ENCODE measurements at regions of chr17 and their contacts with region 1.

Region 1: DNA sequence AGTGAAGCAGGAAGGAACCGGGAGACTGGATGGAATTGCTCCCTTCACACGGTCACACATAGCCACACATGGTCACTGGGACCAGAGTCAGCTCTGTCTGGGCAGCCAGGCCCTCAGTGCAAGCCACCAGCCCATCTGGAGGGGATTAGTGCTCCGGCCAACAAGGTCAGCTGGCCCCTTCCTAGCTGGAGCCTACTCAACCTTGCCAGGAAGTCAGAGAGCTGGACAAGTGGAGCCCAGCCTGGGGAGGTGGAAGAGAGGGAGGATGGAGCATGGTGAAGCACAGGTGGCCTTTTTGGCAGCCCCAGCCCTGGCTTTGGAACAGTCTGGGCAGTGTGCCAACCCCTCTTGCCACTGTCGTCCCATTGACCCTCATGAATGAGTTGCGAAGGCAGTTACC is 3.7 kb upstream of the CACNA1G start:
- DNase-seq: no peak
- ATAC-seq: no peak
- H3K4me3 ChIP-seq: no peak overlapping the region
- H3K27ac ChIP-seq: no peak overlapping the region
- H3K4me1 ChIP-seq: peaks cover 3% of the 10 kb centered on the region; the same call in 1 of the 2 replicates
- H3K27me3 ChIP-seq: peaks cover 38% of the 10 kb centered on the region
- CTCF ChIP-seq: no peak
- POLR2A ChIP-seq: no peak
- RAD21 ChIP-seq: no peak

Region 2: GRCh38 chr17:50719144-50719923 is 162.5 kb after region 1 on chr17 and contains the start of gene LUC7L3:
- CTCF ChIA-PET with region 1: no interaction called
- POLR2A ChIA-PET with region 1: interaction called, 14 read pairs
- dilution Hi-C with region 1: no loop called
- in situ Hi-C with region 1: no loop called
- intact Hi-C with region 1: no loop called
- DNase-seq: peak; percentile 91
- ATAC-seq: peak; percentile 97
- H3K4me3 ChIP-seq: peak within 1 kb of the TSS; percentile 79
- H3K27ac ChIP-seq: peak within 1 kb of the TSS; percentile 91
- H3K4me1 ChIP-seq: no peaks in the 10 kb centered on the region
- H3K27me3 ChIP-seq: no peaks in the 10 kb centered on the region
- CTCF ChIP-seq: no peak
- POLR2A ChIP-seq: peak; percentile 96
- RAD21 ChIP-seq: no peak
- total RNA-seq, gene LUC7L3: 17.7 and 20.0 TPM in 2 replicates

Measured in IMR-90 (cell line).